Esophagus muscularis mucosa (tissue), 4 donors: ENCODE measurements at regions of chr7 and their contacts with region 1.

Region 1: DNA sequence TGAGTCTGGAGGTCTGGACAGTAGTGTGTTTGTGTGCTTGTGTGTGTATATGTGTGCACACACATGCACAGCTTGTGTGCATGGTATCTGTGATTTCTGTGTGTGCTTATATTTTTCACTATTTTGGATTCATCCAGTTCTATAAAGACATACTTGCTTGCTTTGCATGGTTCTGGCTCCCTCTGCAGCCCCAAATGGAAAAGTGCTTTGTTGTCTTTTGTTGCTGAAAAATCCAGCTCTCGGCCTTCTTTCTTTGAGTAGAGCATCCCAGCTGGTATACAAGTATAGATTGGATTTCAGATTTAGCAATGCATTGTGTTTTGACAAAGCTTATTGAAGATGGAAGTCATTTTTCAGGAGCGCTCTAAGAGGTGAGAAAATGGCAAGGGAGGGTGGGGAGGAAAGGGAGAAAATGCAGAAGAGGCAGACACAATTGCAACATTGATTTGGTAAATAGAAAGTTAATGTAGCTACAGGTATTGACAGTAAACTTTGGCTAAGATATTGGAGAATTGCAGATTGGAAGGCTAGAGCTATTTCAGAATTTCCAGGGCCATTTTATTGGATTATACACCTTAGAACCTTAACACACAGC is 333.9 kb downstream of the AUTS2 start:
- DNase-seq: no peak
- H3K4me3 ChIP-seq: no peak overlapping the region
- H3K27ac ChIP-seq: no peak overlapping the region
- H3K4me1 ChIP-seq: peaks cover 0 to 33% (median 25%) of the 10 kb centered on the region in 4 donors
- H3K27me3 ChIP-seq: no peaks in the 10 kb centered on the region
- CTCF ChIP-seq: peak; percentile 60 to 70 (median 63)
- EP300 ChIP-seq: no peak
- POLR2A ChIP-seq: no peak

Region 2: GRCh38 chr7:69609541-69610373 is 322.4 kb before region 1 on chr7:
- intact Hi-C with region 1: loop called (anchors 5 kb)
- DNase-seq: no peak
- H3K4me3 ChIP-seq: no peak overlapping the region
- H3K27ac ChIP-seq: no peak overlapping the region
- H3K4me1 ChIP-seq: peaks cover 13 to 67% (median 42%) of the 10 kb centered on the region in 4 donors
- H3K27me3 ChIP-seq: no peaks in the 10 kb centered on the region
- CTCF ChIP-seq: no peak
- EP300 ChIP-seq: no peak
- POLR2A ChIP-seq: no peak